Esophagus squamous epithelium (tissue), 5 donors: ENCODE measurements at regions of chr10 and their contacts with region 1.

Region 1: DNA sequence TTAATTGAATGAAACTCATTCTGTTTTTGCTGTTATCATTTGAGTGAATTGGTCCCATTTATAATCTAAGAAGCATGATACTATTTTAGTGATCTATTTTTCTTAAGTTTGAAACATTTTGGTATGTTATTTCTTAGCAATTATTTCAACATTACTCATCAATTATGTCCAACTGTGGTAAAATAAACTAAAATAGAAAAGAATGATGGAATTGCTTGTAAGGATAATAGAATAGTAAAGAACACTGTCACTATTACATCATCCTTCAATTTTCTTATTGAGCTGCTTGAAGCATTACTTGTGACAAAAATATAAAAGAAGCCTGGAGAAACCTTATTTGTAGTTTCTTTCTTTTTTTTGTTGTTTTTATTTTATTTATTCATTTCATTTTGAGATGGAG is 42.4 kb downstream of the ZNF487 start:
- DNase-seq: no peak
- H3K4me3 ChIP-seq: no peak overlapping the region
- H3K27ac ChIP-seq: no peak overlapping the region
- H3K4me1 ChIP-seq: no peaks in the 10 kb centered on the region
- H3K27me3 ChIP-seq: no peaks in the 10 kb centered on the region
- CTCF ChIP-seq: no peak
- POLR2A ChIP-seq: no peak

Region 2: DNA sequence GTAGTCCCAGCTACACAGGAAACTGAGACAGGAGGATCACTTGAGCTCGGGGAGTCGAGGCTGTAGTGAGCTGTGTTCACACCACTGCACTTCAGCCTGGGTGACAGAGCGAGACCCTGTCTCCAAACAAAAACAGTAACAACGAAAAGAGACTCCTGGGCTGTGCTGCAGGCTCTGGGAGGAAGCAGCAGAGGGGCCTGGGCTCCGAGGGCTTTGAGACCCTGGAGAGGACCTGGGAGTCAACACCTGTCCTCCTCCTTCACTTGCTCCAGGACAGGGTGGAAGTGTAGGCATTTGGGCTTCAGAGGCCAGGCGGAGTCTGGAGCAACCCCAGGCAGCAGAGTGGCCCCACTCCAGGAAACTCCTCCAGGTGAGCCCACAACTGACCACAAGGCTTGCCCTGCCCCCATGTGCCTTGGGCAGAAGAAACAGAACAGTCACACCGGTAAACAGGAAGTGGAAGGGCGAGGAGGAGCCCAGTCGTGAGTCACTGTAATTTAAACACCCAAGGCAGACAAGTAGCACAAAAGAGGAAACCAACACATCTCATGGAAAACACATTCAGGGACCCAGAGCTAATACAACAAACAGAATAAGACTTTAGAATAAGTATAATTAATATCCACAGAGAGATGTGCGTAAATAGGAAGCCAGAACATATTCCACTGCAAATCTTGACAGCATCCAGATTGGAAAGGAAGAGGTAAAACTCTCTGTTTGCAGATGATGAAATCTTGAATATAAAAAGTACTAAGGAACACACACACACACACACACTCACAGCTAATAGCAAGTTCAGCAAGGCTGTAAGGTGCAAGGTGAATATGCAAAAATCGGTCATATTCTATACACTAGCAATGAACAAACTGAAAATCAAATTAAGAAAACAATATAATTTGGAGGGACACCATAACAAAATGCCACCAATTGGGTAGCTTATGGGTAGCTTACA is 191.9 kb before region 1 on chr10:
- intact Hi-C with region 1: loop called (anchors 10 kb)
- DNase-seq: no peak
- H3K4me3 ChIP-seq: no peak overlapping the region
- H3K27ac ChIP-seq: no peak overlapping the region
- H3K4me1 ChIP-seq: peaks cover 0 to 13% (median 0%) of the 10 kb centered on the region in 3 donors
- H3K27me3 ChIP-seq: peaks cover 0 to 37% (median 0%) of the 10 kb centered on the region in 4 donors
- CTCF ChIP-seq: no peak
- POLR2A ChIP-seq: no peak